Caco-2 (cell line): ENCODE measurements at regions of chr4 and their contacts with region 1.

Region 1: GRCh38 chr4:105708530-105709391 is at the starts of genes GSTCD and INTS12:
- DNase-seq: peak; percentile 92 to 94
- H3K4me3 ChIP-seq: peak within 1 kb of the TSS; percentile 54
- H3K4me3 Mint-ChIP-seq: peak within 1 kb of the TSS; percentile 89
- H3K27ac Mint-ChIP-seq: peak within 1 kb of the TSS; percentile 92
- H3K4me1 ChIP-seq: no peaks in the 10 kb centered on the region; the same call in 1 of the 2 replicates
- H3K4me1 Mint-ChIP-seq: peaks cover 17% of the 10 kb centered on the region
- H3K27me3 ChIP-seq: no peaks in the 10 kb centered on the region
- H3K27me3 Mint-ChIP-seq: no peaks in the 10 kb centered on the region
- CTCF ChIP-seq: no peak
- total RNA-seq, gene GSTCD: 20.5 and 21.3 TPM in 2 replicates
- total RNA-seq, gene INTS12: 16.1 and 19.2 TPM in 2 replicates

Region 2: DNA sequence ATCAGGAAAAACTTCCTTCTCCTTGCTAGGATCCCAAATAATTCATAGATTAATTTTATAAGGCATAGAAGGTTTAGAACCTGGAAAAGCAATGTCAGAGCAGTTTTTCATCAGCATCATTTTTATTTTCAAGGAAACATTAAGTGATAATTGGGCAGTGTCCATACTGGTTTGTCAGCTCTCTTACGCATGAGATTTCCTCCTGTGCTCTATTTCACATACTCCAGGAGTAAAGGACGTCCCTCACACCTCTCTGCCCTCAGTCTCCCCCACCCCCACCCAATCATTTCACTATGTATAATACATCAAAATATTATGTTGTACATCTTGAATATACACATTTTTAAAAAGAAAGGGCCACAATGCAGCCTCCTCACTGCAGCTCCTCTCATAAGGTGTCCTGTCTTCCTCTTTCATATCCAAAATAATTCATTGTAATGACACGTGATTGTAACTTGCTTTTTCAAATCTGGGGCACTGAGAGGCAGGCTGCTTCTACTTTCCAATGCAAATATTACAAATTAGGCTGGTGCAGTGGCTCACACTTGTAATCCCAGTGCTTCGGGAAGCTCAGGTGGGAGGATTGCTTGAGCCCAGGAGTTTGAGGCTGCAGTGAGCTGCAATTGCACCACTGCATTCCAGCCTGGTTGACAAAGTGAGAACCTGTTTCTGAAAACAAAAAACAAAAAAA is 122.0 kb before region 1 on chr4:
- CTCF ChIA-PET with region 1: interaction called, 3 read pairs
- POLR2A ChIA-PET with region 1: no interaction called
- intact Hi-C with region 1: loop called (anchors 2 kb)
- DNase-seq: no peak
- H3K4me3 ChIP-seq: no peak overlapping the region
- H3K4me3 Mint-ChIP-seq: peak overlapping the region; percentile 64
- H3K27ac Mint-ChIP-seq: peak overlapping the region; percentile 82
- H3K4me1 ChIP-seq: peaks cover 31% of the 10 kb centered on the region
- H3K4me1 Mint-ChIP-seq: peaks cover 46% of the 10 kb centered on the region
- H3K27me3 ChIP-seq: no peaks in the 10 kb centered on the region
- H3K27me3 Mint-ChIP-seq: no peaks in the 10 kb centered on the region
- CTCF ChIP-seq: no peak

Region 3: GRCh38 chr4:105594099-105594993 is 114.4 kb before region 1 on chr4:
- CTCF ChIA-PET with region 1: no interaction called
- POLR2A ChIA-PET with region 1: no interaction called
- intact Hi-C with region 1: loop called (anchors 2 kb)
- DNase-seq: peak in 1 of 2 experiments; percentile 57
- H3K4me3 ChIP-seq: no peak overlapping the region
- H3K4me3 Mint-ChIP-seq: peak overlapping the region; percentile 47
- H3K27ac Mint-ChIP-seq: peak overlapping the region; percentile 19
- H3K4me1 ChIP-seq: peaks cover 32% of the 10 kb centered on the region
- H3K4me1 Mint-ChIP-seq: peaks cover 18% of the 10 kb centered on the region
- H3K27me3 ChIP-seq: no peaks in the 10 kb centered on the region
- H3K27me3 Mint-ChIP-seq: no peaks in the 10 kb centered on the region
- CTCF ChIP-seq: no peak

Region 4: DNA sequence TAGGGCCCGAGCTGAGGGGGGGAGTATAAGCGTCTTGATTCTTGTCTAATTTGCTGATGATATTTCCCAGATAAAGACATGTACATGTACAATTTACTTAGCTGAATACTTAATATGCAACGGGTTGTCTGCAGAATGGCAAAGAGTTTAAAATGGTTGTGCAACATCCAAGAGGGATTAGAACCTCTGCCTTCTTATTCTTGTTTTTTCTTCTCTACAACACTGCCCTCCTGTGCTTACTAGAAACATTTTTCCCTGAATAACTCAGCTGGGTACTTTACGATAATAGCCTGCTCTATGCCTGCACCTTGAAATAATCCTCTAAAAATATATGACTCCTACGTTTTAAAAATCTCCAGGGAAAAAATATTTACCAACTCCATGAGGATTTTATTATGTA is 42.1 kb before region 1 on chr4:
- CTCF ChIA-PET with region 1: no interaction called
- POLR2A ChIA-PET with region 1: no interaction called
- intact Hi-C with region 1: no loop called
- DNase-seq: peak in 1 of 2 experiments; percentile 22
- H3K4me3 ChIP-seq: no peak overlapping the region
- H3K4me3 Mint-ChIP-seq: no peak overlapping the region
- H3K27ac Mint-ChIP-seq: no peak overlapping the region
- H3K4me1 ChIP-seq: no peaks in the 10 kb centered on the region
- H3K4me1 Mint-ChIP-seq: no peaks in the 10 kb centered on the region
- H3K27me3 ChIP-seq: no peaks in the 10 kb centered on the region
- H3K27me3 Mint-ChIP-seq: no peaks in the 10 kb centered on the region
- CTCF ChIP-seq: peak; percentile 40 to 41

Region 5: DNA sequence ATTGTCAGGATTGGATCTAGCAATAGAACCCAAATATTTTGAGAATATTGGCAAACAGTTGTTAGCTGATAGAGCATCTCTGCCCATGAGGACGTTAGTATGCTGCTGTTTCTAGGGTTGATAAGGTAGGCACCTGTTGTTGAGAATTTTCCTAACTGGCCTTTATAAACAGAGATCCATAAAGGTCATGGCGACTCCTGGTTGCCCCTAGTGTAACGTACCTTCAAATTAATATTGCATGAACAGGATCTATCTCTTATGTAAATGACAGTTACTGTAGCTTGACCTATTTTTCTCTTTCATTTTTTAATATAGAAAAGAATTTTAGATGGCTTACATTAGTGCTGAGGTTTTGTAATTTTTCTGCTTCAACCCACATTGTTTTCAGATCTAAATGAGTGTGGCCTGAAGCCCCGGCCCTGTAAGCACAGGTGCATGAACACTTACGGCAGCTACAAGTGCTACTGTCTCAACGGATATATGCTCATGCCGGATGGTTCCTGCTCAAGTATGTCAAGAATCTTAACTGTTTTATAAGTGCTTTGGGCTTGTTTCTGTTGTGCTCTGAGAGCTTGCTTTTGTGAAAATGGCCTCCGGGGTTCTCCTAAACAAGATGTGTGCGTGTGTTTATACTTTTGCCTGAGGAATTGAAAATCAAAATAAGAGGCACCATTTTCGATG is 228.0 kb after region 1 on chr4:
- CTCF ChIA-PET with region 1: interaction called, 10 read pairs
- POLR2A ChIA-PET with region 1: no interaction called
- intact Hi-C with region 1: no loop called
- DNase-seq: no peak
- H3K4me3 ChIP-seq: no peak overlapping the region
- H3K4me3 Mint-ChIP-seq: no peak overlapping the region
- H3K27ac Mint-ChIP-seq: no peak overlapping the region
- H3K4me1 ChIP-seq: no peaks in the 10 kb centered on the region
- H3K4me1 Mint-ChIP-seq: no peaks in the 10 kb centered on the region
- H3K27me3 ChIP-seq: no peaks in the 10 kb centered on the region
- H3K27me3 Mint-ChIP-seq: no peaks in the 10 kb centered on the region
- CTCF ChIP-seq: no peak

Region 6: GRCh38 chr4:106201373-106201772 is 492.6 kb after region 1 on chr4:
- CTCF ChIA-PET with region 1: no interaction called
- POLR2A ChIA-PET with region 1: no interaction called
- intact Hi-C with region 1: loop called (anchors 2 kb)
- DNase-seq: no peak
- H3K4me3 ChIP-seq: no peak overlapping the region
- H3K4me3 Mint-ChIP-seq: no peak overlapping the region
- H3K27ac Mint-ChIP-seq: no peak overlapping the region
- H3K4me1 ChIP-seq: no peaks in the 10 kb centered on the region
- H3K4me1 Mint-ChIP-seq: no peaks in the 10 kb centered on the region
- H3K27me3 ChIP-seq: no peaks in the 10 kb centered on the region
- H3K27me3 Mint-ChIP-seq: no peaks in the 10 kb centered on the region
- CTCF ChIP-seq: peak; percentile 13 to 22